Activated T-helper 1 cell treated with anti-CD3 and anti-CD28 coated beads, Interleukin-12 subunit alpha, Interleukin-12 subunit beta, Interleukin-2, Interleukin-4 antibody, amounts not matched to agents 30 ng/mL and 10 ng/mL and 1 ng/mL, durations not matched to agents 14 hours and 24 hours and 36 hours (primary cell): ENCODE measurements at regions of chr1 and their contacts with region 1.

Region 1: GRCh38 chr1:52659356-52659755 is 26.4 kb downstream of the SHISAL2A start:
- DNase-seq: peak; percentile 20
- H3K4me3 Mint-ChIP-seq: peak overlapping the region; percentile 29
- H3K27ac Mint-ChIP-seq: peak overlapping the region; percentile 90
- H3K4me1 Mint-ChIP-seq: peaks cover 31% of the 10 kb centered on the region
- H3K27me3 Mint-ChIP-seq: no peaks in the 10 kb centered on the region

Region 2: DNA sequence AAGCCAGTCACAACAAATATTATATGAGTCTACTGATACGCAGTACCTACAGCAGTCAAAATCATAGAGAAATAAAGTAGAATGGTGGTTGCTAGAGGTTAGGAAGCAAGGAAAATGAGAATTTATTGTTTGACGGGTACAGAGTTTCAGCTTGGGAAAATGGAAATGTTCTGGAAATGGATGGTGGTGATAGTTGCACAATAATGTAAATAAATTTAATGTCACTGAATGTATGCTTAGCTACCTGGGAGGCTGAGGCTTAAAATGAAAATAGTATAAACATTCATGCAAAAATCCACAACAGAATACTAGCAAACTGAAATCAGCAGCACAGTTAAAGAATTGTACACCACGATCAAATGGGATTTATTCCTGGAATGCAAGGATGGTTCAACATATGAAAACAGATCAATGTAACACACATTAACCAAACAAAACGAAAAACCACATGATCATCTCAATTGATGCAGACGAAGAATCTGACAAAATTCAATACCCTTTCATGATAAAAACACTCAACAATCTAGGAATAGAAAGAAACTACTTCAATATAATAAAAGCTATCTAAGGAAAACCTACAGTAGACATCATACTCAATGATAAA is 117.2 kb before region 1 on chr1:
- intact Hi-C with region 1: no loop called
- DNase-seq: no peak
- H3K4me3 Mint-ChIP-seq: no peak overlapping the region
- H3K27ac Mint-ChIP-seq: no peak overlapping the region
- H3K4me1 Mint-ChIP-seq: peaks cover 6% of the 10 kb centered on the region
- H3K27me3 Mint-ChIP-seq: no peaks in the 10 kb centered on the region

Region 3: GRCh38 chr1:52601991-52602855 is 57.1 kb before region 1 on chr1 and contains the start of gene GPX7:
- intact Hi-C with region 1: loop called (anchors 2 kb)
- DNase-seq: peak; percentile 54
- H3K4me3 Mint-ChIP-seq: peak within 1 kb of the TSS; percentile 87
- H3K27ac Mint-ChIP-seq: peak within 1 kb of the TSS; percentile 86
- H3K4me1 Mint-ChIP-seq: peaks cover 49% of the 10 kb centered on the region
- H3K27me3 Mint-ChIP-seq: no peaks in the 10 kb centered on the region
- total RNA-seq, gene GPX7: 32.7 and 32.8 TPM in 2 replicates

Region 4: DNA sequence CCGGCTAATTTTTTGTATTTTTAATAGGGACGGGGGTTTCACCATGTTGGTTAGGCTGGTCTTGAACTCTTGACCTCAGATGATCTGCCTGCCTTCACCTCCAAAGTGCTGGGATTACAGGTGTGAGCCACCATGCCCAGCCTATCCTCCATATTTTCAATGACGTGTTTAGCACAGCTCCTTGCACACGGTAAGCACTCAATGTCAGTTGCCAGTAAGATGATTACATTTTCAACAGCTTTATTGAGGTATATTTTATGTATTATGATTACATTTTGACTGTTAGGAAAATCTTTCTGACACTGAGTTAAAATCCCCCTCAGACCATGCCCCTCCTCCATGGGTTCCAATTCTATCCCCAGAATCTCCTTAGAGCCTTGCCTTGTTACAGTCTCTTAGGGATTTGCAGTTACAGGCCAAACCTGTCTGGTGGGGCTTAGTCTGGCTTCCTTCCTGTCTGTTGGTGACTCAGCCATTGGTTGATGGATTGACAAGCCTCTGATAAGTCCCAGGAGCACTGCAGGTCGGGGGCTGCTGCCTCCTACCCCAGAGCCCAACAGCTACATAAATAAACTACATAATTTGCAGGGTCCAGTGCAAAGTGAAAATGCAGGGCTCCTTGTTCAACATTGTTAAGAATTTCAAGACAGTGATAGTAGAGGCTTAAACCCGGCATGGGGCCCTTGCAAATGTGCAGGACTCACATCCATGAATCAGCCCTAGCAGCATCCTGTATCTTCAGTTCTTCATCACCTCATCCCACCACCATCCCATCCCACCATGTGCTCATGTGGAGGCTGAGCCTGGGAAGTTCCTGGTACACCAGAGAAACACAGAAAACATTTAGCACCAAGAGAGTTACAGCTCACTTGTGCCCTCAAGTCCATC is 15.4 kb after region 1 on chr1:
- intact Hi-C with region 1: no loop called
- DNase-seq: no peak
- H3K4me3 Mint-ChIP-seq: no peak overlapping the region
- H3K27ac Mint-ChIP-seq: peak overlapping the region; percentile 2
- H3K4me1 Mint-ChIP-seq: peaks cover 10% of the 10 kb centered on the region
- H3K27me3 Mint-ChIP-seq: peaks cover 2% of the 10 kb centered on the region

Region 5: DNA sequence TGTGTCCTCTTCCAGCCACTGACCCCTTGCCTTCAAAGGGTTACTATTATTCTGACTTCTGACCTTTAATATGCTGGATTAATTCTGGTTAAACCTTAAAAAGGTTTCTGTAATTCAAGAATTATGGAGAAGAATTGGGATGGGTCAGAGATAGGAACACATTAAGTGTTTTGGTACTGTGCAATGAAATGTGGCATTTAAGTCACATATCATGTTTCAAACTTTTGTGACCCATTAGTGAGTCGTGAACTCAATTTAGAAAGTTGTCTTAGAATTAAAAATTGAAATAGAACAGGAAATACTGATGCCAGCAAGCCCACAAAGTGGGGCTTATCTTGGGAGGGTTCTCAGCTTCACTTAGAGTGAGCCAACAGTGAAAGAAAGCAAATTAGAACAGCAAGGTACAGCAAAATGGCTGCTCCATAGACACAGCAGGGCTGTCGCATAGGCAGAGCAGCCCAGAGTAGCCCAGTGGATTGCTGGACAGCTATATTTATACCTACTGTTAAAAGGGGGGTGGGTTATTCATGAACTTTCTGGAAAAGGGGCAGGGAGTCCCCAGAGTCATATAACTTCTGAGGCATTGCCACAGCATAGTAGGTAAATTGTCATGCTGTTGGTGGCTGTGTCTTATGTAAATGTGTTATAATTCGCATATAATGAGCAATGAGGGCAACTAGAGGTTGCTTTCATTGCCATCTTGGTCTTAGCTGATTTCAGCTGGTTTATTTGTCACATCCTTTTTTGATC is 278.3 kb after region 1 on chr1:
- intact Hi-C with region 1: no loop called
- DNase-seq: no peak
- H3K4me3 Mint-ChIP-seq: no peak overlapping the region
- H3K27ac Mint-ChIP-seq: no peak overlapping the region
- H3K4me1 Mint-ChIP-seq: no peaks in the 10 kb centered on the region
- H3K27me3 Mint-ChIP-seq: no peaks in the 10 kb centered on the region